A673 (cell line): ENCODE measurements at regions of chr1 and their contacts with region 1.

Region 1: DNA sequence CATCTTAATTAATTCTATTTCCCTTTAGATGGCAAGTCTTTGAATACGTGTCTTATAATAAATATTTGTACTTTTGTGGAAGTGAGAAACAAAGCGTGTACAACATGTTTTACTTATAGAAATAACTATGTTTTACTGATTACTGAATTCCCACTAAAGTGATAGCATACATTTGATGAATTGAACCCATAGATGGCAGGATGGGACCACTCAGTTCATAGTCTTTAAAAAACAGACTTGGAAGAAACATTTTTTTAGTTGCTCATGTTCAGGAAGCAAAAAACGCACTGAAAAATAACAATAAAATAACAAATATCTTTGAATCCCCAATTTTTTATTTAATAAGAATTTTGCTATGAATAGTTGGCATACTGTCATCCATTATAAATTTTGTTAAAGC is 507.1 kb upstream of the ZRANB2 start:
- DNase-seq: peak; percentile 56
- H3K4me3 ChIP-seq: no peak overlapping the region
- H3K27ac ChIP-seq: no peak overlapping the region
- H3K4me1 ChIP-seq: peaks cover 22% of the 10 kb centered on the region
- H3K27me3 ChIP-seq: no peaks in the 10 kb centered on the region
- CTCF ChIP-seq: peak; percentile 71

Region 2: GRCh38 chr1:71196685-71197084 is 391.3 kb before region 1 on chr1:
- CTCF ChIA-PET with region 1: no interaction called
- POLR2A ChIA-PET with region 1: no interaction called
- intact Hi-C with region 1: loop called (anchors 2 kb)
- DNase-seq: peak; percentile 56
- H3K4me3 ChIP-seq: no peak overlapping the region
- H3K27ac ChIP-seq: no peak overlapping the region
- H3K4me1 ChIP-seq: no peaks in the 10 kb centered on the region
- H3K27me3 ChIP-seq: no peaks in the 10 kb centered on the region
- CTCF ChIP-seq: peak; percentile 61

Region 3: DNA sequence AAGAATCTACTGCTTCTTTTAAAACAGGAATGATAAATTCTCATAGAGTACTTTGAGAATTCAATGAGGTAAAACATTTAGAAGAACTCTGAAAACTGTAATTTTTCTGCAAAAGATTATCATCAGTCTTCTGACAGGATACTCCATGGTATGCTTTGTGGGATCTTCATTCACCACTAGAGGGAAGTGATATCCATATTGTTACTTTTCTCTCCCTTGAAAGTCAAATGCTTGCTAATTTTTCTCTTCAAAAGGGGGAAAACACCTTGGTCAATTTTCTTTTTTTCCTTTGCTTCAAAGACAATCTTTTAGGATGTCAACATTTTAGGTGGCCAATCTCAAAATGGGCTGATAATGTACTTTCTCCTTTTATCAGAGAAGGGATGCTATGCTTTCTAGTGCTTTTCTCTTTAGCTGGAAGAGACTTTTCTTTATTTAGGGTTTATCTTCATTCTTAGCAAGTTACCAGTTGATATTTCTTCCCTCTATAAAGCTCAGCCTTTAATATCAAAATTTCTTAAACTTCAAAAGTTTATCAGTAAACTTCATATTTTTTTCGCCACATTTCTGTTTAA is 598.9 kb after region 1 on chr1:
- CTCF ChIA-PET with region 1: no interaction called
- POLR2A ChIA-PET with region 1: no interaction called
- intact Hi-C with region 1: loop called (anchors 5 kb)
- DNase-seq: peak; percentile 60
- H3K4me3 ChIP-seq: no peak overlapping the region
- H3K27ac ChIP-seq: no peak overlapping the region
- H3K4me1 ChIP-seq: peaks cover 41% of the 10 kb centered on the region
- H3K27me3 ChIP-seq: no peaks in the 10 kb centered on the region
- CTCF ChIP-seq: peak; percentile 78

Region 4: GRCh38 chr1:72851597-72851996 is 1263.6 kb after region 1 on chr1:
- CTCF ChIA-PET with region 1: no interaction called
- POLR2A ChIA-PET with region 1: no interaction called
- intact Hi-C with region 1: loop called (anchors 10 kb)
- DNase-seq: peak; percentile 64
- H3K4me3 ChIP-seq: no peak overlapping the region
- H3K27ac ChIP-seq: no peak overlapping the region
- H3K4me1 ChIP-seq: peaks cover 8% of the 10 kb centered on the region
- H3K27me3 ChIP-seq: no peaks in the 10 kb centered on the region
- CTCF ChIP-seq: no peak